CD4-positive, alpha-beta T cell (primary cell): ENCODE measurements at regions of chr10 and their contacts with region 1.

Region 1: DNA sequence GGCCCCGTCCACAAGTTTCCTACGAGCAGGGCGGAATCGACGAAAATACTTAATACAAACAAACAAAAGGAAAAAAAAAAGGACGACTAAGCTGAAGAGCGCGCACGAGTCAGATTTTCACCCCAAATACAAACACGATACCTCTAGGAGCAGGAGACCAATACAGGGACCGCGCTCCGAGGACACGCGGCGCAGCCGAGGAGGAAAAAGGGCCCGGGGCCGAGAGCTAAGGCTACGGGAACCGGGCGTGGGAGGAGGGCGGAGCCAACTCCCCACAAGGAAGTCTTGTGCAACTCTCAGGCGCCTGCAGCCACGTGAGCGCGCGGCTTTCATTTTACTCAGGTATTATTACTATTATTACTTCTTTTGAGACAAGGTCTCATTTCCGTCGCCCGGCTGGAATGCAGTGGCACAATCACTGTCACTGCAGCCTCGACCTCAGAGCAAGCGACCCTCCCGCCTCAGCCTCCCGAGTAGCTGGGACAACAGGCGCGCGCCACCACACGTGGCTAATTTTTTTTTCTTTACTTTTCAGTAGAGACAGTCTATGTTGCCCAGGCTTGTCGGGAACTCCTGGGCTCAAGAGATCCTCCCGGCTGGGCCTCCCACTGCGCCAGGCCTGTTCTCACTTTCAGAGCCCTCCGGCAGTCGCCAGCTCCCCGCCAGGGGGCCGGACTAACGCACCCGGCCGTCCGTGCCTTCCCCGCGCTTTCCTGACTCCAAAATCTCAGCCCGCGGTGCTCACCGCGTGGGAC is 1.2 kb downstream of the HNRNPF start:
- DNase-seq: peak; percentile 65 to 94 (median 76)
- ATAC-seq: peak; percentile 35
- H3K4me3 ChIP-seq: peak overlapping the region; percentile 80
- H3K4me3 Mint-ChIP-seq: peak overlapping the region; percentile 98
- H3K27ac ChIP-seq: peak overlapping the region; percentile 98
- H3K27ac Mint-ChIP-seq: peak overlapping the region; percentile 93
- H3K4me1 ChIP-seq: peaks cover 56% of the 10 kb centered on the region
- H3K4me1 Mint-ChIP-seq: peaks cover 45% of the 10 kb centered on the region
- H3K27me3 ChIP-seq: no peaks in the 10 kb centered on the region
- H3K27me3 Mint-ChIP-seq: no peaks in the 10 kb centered on the region
- CTCF ChIP-seq: peak; percentile 52

Region 2: GRCh38 chr10:43361986-43362839 is 45.5 kb before region 1 on chr10:
- CTCF ChIA-PET with region 1: no interaction called
- POLR2A ChIA-PET with region 1: interaction called, 9 read pairs
- intact Hi-C with region 1: loop called in 1 of 2 experiments (anchors 2 kb)
- DNase-seq: peak; percentile 93 to 99 (median 98)
- ATAC-seq: peak; percentile 98
- H3K4me3 ChIP-seq: peak overlapping the region; percentile 82
- H3K4me3 Mint-ChIP-seq: peak overlapping the region; percentile 97
- H3K27ac ChIP-seq: peak overlapping the region; percentile 88 to 97
- H3K27ac Mint-ChIP-seq: peak overlapping the region; percentile 97
- H3K4me1 ChIP-seq: peaks cover 22% of the 10 kb centered on the region
- H3K4me1 Mint-ChIP-seq: peaks cover 32% of the 10 kb centered on the region
- H3K27me3 ChIP-seq: no peaks in the 10 kb centered on the region
- H3K27me3 Mint-ChIP-seq: no peaks in the 10 kb centered on the region
- CTCF ChIP-seq: peak; percentile 64

Region 3: GRCh38 chr10:43396928-43397624 is 10.7 kb before region 1 on chr10:
- CTCF ChIA-PET with region 1: interaction called, 4 read pairs
- POLR2A ChIA-PET with region 1: interaction called, 54 read pairs
- intact Hi-C with region 1: loop called (anchors 1 to 2 kb)
- DNase-seq: peak; percentile 49 to 90 (median 64)
- ATAC-seq: peak; percentile 54
- H3K4me3 ChIP-seq: peak overlapping the region; percentile 67
- H3K4me3 Mint-ChIP-seq: peak overlapping the region; percentile 94
- H3K27ac ChIP-seq: peak overlapping the region; percentile 92 to 94
- H3K27ac Mint-ChIP-seq: peak overlapping the region; percentile 93
- H3K4me1 ChIP-seq: peaks cover 82% of the 10 kb centered on the region
- H3K4me1 Mint-ChIP-seq: peaks cover 86% of the 10 kb centered on the region
- H3K27me3 ChIP-seq: no peaks in the 10 kb centered on the region
- H3K27me3 Mint-ChIP-seq: no peaks in the 10 kb centered on the region
- CTCF ChIP-seq: no peak

Region 4: GRCh38 chr10:43427166-43427825 is 19.5 kb after region 1 on chr10:
- CTCF ChIA-PET with region 1: interaction called, 7 read pairs
- POLR2A ChIA-PET with region 1: interaction called, 11 read pairs
- intact Hi-C with region 1: no loop called
- DNase-seq: peak in 12 of 14 experiments; percentile 22 to 63 (median 44)
- ATAC-seq: peak; percentile 95
- H3K4me3 ChIP-seq: peak overlapping the region; percentile 9
- H3K4me3 Mint-ChIP-seq: peak overlapping the region; percentile 76
- H3K27ac ChIP-seq: no peak overlapping the region
- H3K27ac Mint-ChIP-seq: peak overlapping the region; percentile 89
- H3K4me1 ChIP-seq: peaks cover 21% of the 10 kb centered on the region
- H3K4me1 Mint-ChIP-seq: peaks cover 21% of the 10 kb centered on the region
- H3K27me3 ChIP-seq: no peaks in the 10 kb centered on the region
- H3K27me3 Mint-ChIP-seq: no peaks in the 10 kb centered on the region
- CTCF ChIP-seq: no peak

Region 5: GRCh38 chr10:43453266-43453831 is 45.6 kb after region 1 on chr10:
- CTCF ChIA-PET with region 1: interaction called, 3 read pairs
- POLR2A ChIA-PET with region 1: interaction called, 21 read pairs
- intact Hi-C with region 1: no loop called
- DNase-seq: peak in 1 of 14 experiments; percentile 12
- ATAC-seq: no peak
- H3K4me3 ChIP-seq: no peak overlapping the region
- H3K4me3 Mint-ChIP-seq: peak overlapping the region; percentile 88
- H3K27ac ChIP-seq: peak overlapping the region; percentile 64 to 75
- H3K27ac Mint-ChIP-seq: peak overlapping the region; percentile 97
- H3K4me1 ChIP-seq: peaks cover 61% of the 10 kb centered on the region
- H3K4me1 Mint-ChIP-seq: peaks cover 59% of the 10 kb centered on the region
- H3K27me3 ChIP-seq: no peaks in the 10 kb centered on the region
- H3K27me3 Mint-ChIP-seq: no peaks in the 10 kb centered on the region
- CTCF ChIP-seq: no peak